ENCODE measurements at regions of chr7 and their contacts with region 1.

Region 1: DNA sequence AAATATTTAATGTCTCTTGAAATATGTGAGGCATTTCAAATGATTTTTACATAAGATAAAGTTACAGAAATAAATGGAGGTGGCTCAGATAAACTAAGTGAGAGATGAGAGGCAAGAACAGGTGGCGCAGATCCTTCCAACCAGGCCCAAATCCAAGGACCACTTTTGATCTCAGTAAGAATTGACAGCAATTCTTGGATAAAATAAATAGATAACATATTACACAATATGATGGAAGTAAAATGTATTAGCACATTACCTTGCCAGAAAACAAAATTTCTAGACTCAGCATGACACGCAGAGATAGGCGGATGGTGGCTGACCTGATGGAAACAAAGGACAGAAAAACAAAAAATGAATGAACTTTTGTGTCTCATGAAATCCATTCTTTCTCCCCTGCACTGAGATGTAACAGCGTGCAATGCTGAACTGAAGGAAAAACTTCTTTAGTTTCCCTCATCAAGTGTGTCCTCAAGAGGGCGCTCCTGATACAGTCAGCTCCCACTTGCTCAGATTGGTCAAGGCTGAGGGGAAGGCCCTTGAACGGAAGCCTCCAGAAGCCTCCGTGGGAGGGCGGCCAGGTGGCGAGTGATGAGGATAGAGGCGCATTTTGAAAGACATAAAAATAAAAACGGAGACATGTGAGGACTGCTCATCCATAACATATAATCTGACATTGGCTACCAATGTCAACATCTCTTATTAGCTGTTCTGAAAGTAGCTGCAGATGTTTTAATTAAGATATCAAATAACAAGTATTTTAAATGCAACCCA is 62.8 kb upstream of the GSDME start:
- DNase-seq: peak; percentile 86
- H3K4me3 ChIP-seq: no peak overlapping the region
- H3K27ac ChIP-seq: peak overlapping the region in 1 of 2 donors; percentile 29
- H3K4me1 ChIP-seq: no peaks in the 10 kb centered on the region
- H3K27me3 ChIP-seq: no peaks in the 10 kb centered on the region
- CTCF ChIP-seq: peak; percentile 53 to 89 (median 78)
- POLR2A ChIP-seq: peak; percentile 26

Region 2: GRCh38 chr7:24979863-24980533 is 159.9 kb after region 1 on chr7 and contains the start of gene OSBPL3:
- intact Hi-C with region 1: loop called (anchors 5 kb)
- DNase-seq: peak; percentile 95
- H3K4me3 ChIP-seq: peak within 1 kb of the TSS; percentile 44 to 57
- H3K27ac ChIP-seq: peak within 1 kb of the TSS; percentile 69 to 70
- H3K4me1 ChIP-seq: no peaks in the 10 kb centered on the region
- H3K27me3 ChIP-seq: no peaks in the 10 kb centered on the region
- CTCF ChIP-seq: no peak
- POLR2A ChIP-seq: peak; percentile 63
- total RNA-seq, gene OSBPL3: 3.1 to 6.3 TPM

Region 3: DNA sequence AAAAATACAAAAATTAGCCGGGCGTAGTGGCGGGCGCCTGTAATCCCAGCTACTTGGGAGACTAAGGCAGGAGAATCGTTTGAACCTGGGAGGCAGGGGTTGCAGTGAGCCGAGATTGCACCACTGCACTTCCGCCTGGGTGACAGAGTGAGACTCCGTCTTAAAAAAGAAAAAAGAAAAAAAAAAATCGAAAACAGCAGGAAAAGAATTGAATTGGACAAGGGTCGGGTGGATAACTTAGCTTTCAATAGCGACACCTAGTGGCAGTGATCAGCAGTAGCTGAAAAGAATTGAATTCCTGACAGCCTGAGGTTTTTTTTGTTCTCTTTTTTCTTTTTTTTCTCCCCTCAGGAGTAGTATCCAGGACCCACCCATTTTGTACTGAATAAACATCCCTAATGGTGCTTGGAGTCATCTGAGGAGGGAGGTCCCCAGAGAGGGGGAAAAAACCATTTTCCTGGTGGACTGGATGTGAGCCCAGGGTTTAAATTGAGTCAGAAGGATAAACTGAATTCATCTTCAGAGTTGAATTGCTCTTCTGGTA is 249.9 kb after region 1 on chr7:
- intact Hi-C with region 1: loop called (anchors 2 kb)
- DNase-seq: peak; percentile 42
- H3K4me3 ChIP-seq: no peak overlapping the region
- H3K27ac ChIP-seq: no peak overlapping the region
- H3K4me1 ChIP-seq: no peaks in the 10 kb centered on the region
- H3K27me3 ChIP-seq: no peaks in the 10 kb centered on the region
- CTCF ChIP-seq: peak; percentile 77 to 90 (median 78)
- POLR2A ChIP-seq: no peak

Region 4: DNA sequence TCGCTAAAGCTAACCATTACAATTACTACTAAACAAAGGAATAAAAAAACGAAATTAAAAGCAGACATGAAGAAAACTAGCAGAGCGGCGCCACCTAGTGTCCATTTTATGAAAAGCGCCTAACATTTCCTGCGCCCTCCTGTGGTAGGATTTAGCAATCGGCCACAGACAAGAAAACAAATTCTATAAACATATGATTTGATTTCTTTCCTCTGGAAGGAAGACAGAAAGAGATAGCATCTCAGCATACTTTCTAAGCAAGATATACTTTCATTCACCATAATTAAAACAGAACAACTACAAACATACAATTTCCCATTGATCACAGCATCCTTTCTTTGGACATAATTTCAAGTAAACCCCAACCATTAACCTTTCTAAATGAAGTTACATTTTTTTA is 745.8 kb after region 1 on chr7:
- intact Hi-C with region 1: no loop called
- DNase-seq: peak; percentile 40
- H3K4me3 ChIP-seq: no peak overlapping the region
- H3K27ac ChIP-seq: no peak overlapping the region
- H3K4me1 ChIP-seq: no peaks in the 10 kb centered on the region
- H3K27me3 ChIP-seq: no peaks in the 10 kb centered on the region
- CTCF ChIP-seq: peak; percentile 99 to 100 (median 99)
- POLR2A ChIP-seq: no peak